IMR-90 (cell line): ENCODE measurements at regions of chr10 and their contacts with region 1.

Region 1: DNA sequence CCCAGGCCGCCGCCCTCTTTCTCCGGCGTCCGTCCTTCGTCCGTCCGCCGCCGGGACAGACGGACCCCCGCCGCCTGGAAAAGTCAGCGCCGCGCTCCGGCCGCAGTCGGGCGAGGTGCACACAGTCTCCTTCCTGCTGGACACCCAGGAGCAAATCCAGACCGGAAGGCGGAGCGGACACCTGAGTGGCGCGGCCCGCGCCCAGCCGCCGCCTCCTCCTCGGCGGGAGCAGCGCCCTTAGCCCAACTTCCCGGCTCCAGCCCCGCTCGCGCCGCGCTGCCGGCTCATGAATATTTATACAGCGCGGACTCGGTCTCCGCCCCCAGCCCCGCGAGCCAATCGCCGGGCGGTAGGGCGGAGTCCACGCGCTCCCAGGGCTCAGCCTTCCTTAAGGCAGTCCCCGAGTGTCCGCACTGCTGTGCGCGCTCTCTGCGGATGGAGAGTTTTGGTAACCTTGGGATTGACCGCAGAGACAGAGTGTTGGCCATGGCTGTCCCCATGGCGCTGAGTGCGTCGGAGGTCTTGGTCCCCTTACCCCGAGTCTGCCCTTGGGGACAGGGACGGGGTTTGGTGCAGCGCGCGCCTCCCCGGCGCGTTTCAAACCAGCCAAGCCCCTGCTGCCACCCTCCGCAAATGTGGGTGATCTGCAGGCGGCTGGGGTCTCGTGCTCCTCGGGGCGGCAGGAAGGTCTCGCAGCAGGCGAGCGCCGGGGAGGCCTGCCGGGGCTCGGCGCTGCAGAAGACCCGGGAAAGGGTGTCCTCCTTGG is at the start of gene FZD8:
- DNase-seq: peak; percentile 90
- ATAC-seq: peak; percentile 83
- H3K4me3 ChIP-seq: peak within 1 kb of the TSS; percentile 62
- H3K27ac ChIP-seq: peak within 1 kb of the TSS; percentile 56; the same call in 1 of the 2 replicates
- H3K4me1 ChIP-seq: peaks cover 7% of the 10 kb centered on the region
- H3K27me3 ChIP-seq: 0 out of 2 replicates have a peak, but pooled peaks cover 2% of the 10 kb centered on the region
- CTCF ChIP-seq: peak; percentile 24; the same call in 1 of the 2 replicates
- POLR2A ChIP-seq: peak; percentile 99
- RAD21 ChIP-seq: 0 out of 2 replicates have a peak, but pooled peaks have one; percentile 10
- total RNA-seq, gene FZD8: 3.6 and 4.4 TPM in 2 replicates

Region 2: DNA sequence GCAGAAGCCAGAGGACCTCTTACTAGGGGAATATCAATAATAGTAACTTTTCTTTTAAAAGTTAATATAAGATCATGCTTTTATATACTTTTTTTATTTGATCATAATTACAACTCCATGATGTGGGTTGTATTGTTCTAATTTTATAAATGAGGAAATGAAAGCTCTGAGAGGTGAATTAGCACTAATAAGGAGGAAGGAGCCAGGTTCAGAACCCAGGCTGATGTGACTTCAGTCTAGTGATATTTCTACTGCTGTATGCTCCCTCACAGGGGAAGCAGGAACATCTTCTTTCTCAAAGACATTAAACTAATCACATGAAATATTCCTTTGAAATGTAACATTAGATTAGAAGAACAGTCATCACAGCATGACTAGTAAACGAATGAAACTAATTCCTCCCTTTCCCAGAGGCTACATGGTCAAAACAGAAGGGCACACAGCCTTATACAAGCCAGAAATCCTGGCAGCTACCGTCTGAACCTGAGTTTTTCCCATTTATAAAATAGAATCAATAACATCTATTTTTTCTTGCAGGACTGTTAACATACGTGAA is 118.5 kb before region 1 on chr10:
- CTCF ChIA-PET with region 1: no interaction called
- POLR2A ChIA-PET with region 1: no interaction called
- dilution Hi-C with region 1: no loop called
- in situ Hi-C with region 1: no loop called
- intact Hi-C with region 1: no loop called
- DNase-seq: no peak
- ATAC-seq: no peak
- H3K4me3 ChIP-seq: no peak overlapping the region
- H3K27ac ChIP-seq: no peak overlapping the region
- H3K4me1 ChIP-seq: no peaks in the 10 kb centered on the region
- H3K27me3 ChIP-seq: no peaks in the 10 kb centered on the region
- CTCF ChIP-seq: no peak
- POLR2A ChIP-seq: no peak
- RAD21 ChIP-seq: no peak

Region 3: DNA sequence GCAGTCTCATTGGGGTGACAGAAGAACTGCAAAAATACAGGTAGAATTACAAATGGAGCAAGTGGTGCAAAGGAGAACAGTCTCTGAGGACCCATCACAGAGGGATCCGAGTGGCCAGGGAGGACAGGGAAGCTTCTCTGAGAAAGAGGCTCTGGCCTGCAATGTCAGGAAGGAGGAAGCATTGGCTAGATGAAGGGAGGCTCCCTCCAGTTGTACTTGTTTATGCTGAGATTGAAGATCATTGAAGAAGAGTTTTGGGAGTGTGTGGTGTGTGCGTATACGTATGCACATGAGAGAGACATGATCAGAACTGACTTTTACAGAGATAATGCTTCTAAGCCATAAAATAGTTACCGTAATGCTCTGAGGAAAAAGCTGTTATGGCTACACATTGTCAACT is 274.6 kb after region 1 on chr10:
- CTCF ChIA-PET with region 1: no interaction called
- POLR2A ChIA-PET with region 1: no interaction called
- dilution Hi-C with region 1: no loop called
- in situ Hi-C with region 1: loop called (anchors 10 kb)
- intact Hi-C with region 1: loop called (anchors 2 kb)
- DNase-seq: peak; percentile 61
- ATAC-seq: peak; percentile 38; the same call in 1 of the 2 replicates
- H3K4me3 ChIP-seq: no peak overlapping the region
- H3K27ac ChIP-seq: no peak overlapping the region
- H3K4me1 ChIP-seq: peaks cover 7% of the 10 kb centered on the region; the same call in 1 of the 2 replicates
- H3K27me3 ChIP-seq: no peaks in the 10 kb centered on the region
- CTCF ChIP-seq: peak; percentile 48
- POLR2A ChIP-seq: no peak
- RAD21 ChIP-seq: peak; percentile 66

Region 4: DNA sequence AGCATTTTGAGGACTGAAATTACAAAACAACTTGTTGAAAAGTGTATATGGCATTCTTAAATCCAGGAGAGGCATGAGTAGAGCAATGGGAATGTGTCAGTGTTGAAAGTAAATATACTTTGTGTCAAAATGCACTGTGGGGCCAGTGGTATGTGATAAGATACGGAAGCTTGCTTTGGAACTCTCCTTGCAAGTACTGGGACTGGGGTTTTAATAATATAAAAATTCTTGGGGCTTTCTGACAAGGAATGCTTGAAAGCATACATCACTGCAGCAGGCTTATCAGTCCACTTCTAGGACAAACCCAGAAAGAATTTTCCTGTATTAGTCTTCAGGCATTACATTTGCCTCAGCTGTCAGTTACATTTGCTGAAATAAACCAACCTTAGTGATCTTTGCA is 472.7 kb after region 1 on chr10:
- CTCF ChIA-PET with region 1: no interaction called
- POLR2A ChIA-PET with region 1: no interaction called
- dilution Hi-C with region 1: no loop called
- in situ Hi-C with region 1: no loop called
- intact Hi-C with region 1: loop called (anchors 1 kb)
- DNase-seq: peak; percentile 84
- ATAC-seq: peak; percentile 93
- H3K4me3 ChIP-seq: no peak overlapping the region
- H3K27ac ChIP-seq: no peak overlapping the region
- H3K4me1 ChIP-seq: peaks cover 7% of the 10 kb centered on the region; the same call in 1 of the 2 replicates
- H3K27me3 ChIP-seq: no peaks in the 10 kb centered on the region
- CTCF ChIP-seq: no peak
- POLR2A ChIP-seq: no peak
- RAD21 ChIP-seq: no peak

Region 5: GRCh38 chr10:36349445-36350078 is 707.4 kb after region 1 on chr10:
- CTCF ChIA-PET with region 1: no interaction called
- POLR2A ChIA-PET with region 1: no interaction called
- dilution Hi-C with region 1: no loop called
- in situ Hi-C with region 1: no loop called
- intact Hi-C with region 1: loop called (anchors 10 kb)
- DNase-seq: peak; percentile 91
- ATAC-seq: peak; percentile 100
- H3K4me3 ChIP-seq: no peak overlapping the region
- H3K27ac ChIP-seq: no peak overlapping the region
- H3K4me1 ChIP-seq: peaks cover 7% of the 10 kb centered on the region; the same call in 1 of the 2 replicates
- H3K27me3 ChIP-seq: no peaks in the 10 kb centered on the region
- CTCF ChIP-seq: no peak
- POLR2A ChIP-seq: no peak
- RAD21 ChIP-seq: peak; percentile 27; the same call in 1 of the 2 replicates

Region 6: DNA sequence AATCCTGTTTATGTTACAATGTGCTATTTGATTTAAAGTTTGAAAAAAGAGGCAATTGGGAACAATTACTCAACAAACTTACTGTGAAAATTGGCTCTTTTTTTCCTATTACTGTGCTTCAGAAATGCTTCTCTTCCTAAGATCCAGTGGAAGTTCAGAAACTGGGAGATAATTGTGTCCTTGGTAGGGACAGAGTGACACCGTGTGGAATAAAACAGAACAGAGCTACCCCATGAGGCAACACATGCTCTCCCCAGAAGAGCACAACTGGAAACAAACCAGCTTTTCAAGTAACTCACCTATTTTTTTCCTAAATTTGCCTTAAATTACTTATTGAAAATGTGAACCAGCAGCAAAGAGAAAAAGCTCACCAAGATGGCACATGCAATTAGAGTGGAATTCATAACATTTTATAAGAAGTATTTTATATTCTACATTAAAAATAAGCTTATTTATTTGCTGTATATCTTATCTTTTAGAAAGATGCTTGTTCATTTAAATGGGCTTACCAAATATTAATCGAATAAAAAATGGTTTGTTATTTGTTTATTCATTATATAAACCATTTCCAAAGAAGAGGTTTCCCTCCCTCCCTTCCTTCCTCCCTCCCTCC is 1137.1 kb after region 1 on chr10:
- CTCF ChIA-PET with region 1: interaction called, 11 read pairs
- POLR2A ChIA-PET with region 1: interaction called, 3 read pairs
- dilution Hi-C with region 1: no loop called
- in situ Hi-C with region 1: no loop called
- intact Hi-C with region 1: loop called (anchors 1 kb)
- DNase-seq: peak; percentile 81
- ATAC-seq: peak; percentile 99
- H3K4me3 ChIP-seq: no peak overlapping the region
- H3K27ac ChIP-seq: no peak overlapping the region
- H3K4me1 ChIP-seq: no peaks in the 10 kb centered on the region
- H3K27me3 ChIP-seq: no peaks in the 10 kb centered on the region
- CTCF ChIP-seq: peak; percentile 94
- POLR2A ChIP-seq: no peak
- RAD21 ChIP-seq: peak; percentile 98